A673 (cell line): ENCODE measurements at regions of chr14 and their contacts with region 1.

Region 1: DNA sequence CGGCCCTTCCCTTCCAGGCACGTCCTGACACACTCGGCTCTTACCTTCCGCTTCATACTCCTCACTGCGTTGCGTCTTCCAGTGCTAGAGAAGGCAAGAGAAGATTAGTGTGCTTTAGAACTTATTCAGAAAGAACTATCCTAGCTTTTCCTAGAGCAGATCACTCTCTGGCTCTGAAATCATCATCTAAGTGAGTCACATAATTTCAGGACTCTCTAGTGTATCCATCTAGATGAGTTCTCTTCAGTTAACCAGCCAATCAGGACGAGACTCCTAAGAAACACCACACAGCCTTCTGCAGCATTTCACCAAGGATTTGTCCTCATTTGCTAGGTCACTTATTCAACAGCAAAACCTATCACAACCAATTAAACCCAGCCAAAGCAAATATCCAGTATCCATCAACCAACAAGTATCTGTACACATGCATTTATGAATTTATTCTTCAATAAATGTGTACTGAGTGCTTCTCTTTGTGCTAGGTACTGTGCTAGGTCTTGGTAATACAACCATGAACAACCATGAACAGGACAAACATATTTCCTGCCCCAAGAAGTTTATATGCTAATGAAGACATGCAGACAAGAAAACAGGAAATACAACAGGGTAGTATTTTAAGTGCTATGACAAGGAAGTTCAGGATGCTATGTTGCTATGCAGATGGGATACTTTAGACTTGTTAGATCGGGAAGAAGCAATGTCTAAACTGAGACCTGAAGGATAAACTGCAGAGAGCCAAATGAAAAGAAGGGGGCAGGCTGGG is 52.1 kb downstream of the NIN start:
- DNase-seq: no peak
- H3K4me3 ChIP-seq: no peak overlapping the region
- H3K27ac ChIP-seq: no peak overlapping the region
- H3K4me1 ChIP-seq: peaks cover 6% of the 10 kb centered on the region
- H3K27me3 ChIP-seq: no peaks in the 10 kb centered on the region
- CTCF ChIP-seq: no peak

Region 2: GRCh38 chr14:50599700-50600444 is 179.0 kb before region 1 on chr14:
- CTCF ChIA-PET with region 1: interaction called, 4 read pairs
- POLR2A ChIA-PET with region 1: no interaction called
- intact Hi-C with region 1: loop called (anchors 2 kb)
- DNase-seq: peak; percentile 68
- H3K4me3 ChIP-seq: no peak overlapping the region
- H3K27ac ChIP-seq: no peak overlapping the region
- H3K4me1 ChIP-seq: no peaks in the 10 kb centered on the region
- H3K27me3 ChIP-seq: no peaks in the 10 kb centered on the region
- CTCF ChIP-seq: peak; percentile 80